Dorsolateral prefrontal cortex (tissue), 120 donors: ENCODE measurements at regions of chr9 and their contacts with region 1.

Region 1: GRCh38 chr9:37706290-37706689 is 47.3 kb upstream of the TRMT10B start:
- DNase-seq: no peak
- H3K4me3 ChIP-seq: no peak overlapping the region
- H3K27ac ChIP-seq: no peak overlapping the region
- H3K27me3 ChIP-seq: peaks cover 0 to 4% (median 0%) of the 10 kb centered on the region in 45 donors
- CTCF ChIP-seq: no peak

Region 2: DNA sequence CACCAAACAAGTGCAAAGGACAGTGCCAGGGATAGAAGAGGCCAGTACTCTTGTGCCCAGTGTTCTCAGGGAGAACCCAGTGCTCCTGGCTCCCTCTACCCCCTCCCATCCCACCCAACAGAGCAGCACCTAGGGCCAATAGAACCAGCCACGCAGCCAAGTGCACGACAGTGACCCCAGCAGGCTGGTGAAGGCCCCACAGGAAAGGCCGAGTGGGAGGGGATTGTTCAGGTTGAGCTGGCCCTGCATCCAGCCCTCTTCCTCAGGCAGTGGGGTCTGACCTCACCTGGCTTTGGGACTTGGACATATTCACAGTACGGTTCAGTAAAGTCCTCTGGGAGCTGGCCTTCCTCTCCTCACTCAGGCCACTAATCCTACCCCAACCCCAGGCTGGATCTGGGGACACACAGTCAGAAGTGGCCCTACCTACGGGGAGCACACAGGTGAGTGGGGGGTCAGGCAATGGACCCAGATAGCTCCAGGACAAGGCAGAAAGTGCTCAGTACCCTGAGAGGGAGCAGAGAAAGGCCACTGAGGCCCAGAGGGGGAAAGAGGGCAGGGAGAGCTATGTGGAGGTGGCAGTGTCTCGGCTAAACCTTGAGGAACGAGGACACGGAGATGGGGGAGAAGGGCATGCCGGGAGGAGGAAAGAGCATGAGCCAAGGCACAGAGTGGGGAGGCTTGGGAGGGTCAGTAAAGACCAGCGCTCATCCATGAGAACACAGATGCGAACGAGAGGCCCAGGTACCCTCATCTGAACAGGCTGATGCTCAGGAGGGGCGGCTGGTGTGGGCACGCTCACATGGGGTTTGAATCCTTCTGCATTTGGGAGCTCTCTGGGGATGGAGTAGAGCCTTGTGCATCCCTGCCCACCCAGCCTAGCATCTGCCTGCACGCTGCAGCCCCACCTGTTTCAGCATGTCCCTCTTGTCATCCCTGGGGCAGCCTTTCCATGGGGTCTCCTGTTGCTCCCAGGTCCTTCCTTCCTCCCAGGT is 195.0 kb before region 1 on chr9:
- intact Hi-C with region 1: loop called in 1 of 2 experiments (anchors 10 kb)
- DNase-seq: no peak
- H3K4me3 ChIP-seq: no peak overlapping the region
- H3K27ac ChIP-seq: no peak overlapping the region
- H3K27me3 ChIP-seq: no peaks in the 10 kb centered on the region
- CTCF ChIP-seq: no peak